ENCODE measurements at regions of chr18 and their contacts with region 1.

Region 1: GRCh38 chr18:77207540-77207939 is 42.1 kb upstream of the GALR1 start:
- DNase-seq: peak in 4 of 5 donors; percentile 43 to 89 (median 58)
- H3K4me3 ChIP-seq: no peak overlapping the region
- H3K27ac ChIP-seq: peak overlapping the region in 1 of 2 donors; percentile 45
- H3K4me1 ChIP-seq: peaks cover 0 to 5% (median 5%) of the 10 kb centered on the region in 3 donors
- H3K27me3 ChIP-seq: no peaks in the 10 kb centered on the region
- CTCF ChIP-seq: peak; percentile 47

Region 2: DNA sequence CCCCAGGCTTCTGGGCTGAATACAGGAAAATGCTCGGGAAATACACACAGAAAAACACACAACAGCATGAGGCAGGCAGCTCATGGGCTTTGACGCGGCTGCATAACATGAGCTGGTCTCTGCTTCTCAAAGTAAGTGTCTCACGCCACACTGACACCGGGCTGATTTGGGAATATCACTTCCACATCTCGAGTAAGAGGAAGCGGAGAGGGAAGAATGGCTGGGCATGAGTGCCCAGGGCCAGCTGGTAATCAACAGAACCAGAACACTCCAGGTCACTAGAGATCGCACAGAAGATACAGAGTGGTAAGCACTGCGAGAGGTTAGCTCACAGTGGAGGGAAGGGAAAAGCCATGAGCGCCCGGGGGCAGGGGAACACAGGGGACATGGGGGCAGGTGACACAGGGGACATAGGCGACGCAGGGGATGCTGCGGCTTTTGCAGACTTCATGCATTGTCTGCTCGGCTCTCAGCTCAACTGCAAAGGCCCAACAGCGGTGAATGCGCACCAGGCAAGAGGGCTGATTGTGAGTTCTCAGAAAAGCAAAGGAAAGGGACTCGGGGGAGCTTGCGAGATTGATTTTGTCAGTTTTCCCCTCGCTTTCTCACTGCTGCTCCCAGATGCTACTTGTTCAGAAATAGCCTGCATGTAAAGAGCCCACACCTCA is 216.4 kb before region 1 on chr18:
- intact Hi-C with region 1: loop called (anchors 10 kb)
- DNase-seq: peak in 1 of 5 donors; percentile 32
- H3K4me3 ChIP-seq: no peak overlapping the region
- H3K27ac ChIP-seq: peak overlapping the region in 1 of 2 donors; percentile 3
- H3K4me1 ChIP-seq: peaks cover 0 to 7% (median 0%) of the 10 kb centered on the region in 3 donors
- H3K27me3 ChIP-seq: no peaks in the 10 kb centered on the region
- CTCF ChIP-seq: no peak

Region 3: DNA sequence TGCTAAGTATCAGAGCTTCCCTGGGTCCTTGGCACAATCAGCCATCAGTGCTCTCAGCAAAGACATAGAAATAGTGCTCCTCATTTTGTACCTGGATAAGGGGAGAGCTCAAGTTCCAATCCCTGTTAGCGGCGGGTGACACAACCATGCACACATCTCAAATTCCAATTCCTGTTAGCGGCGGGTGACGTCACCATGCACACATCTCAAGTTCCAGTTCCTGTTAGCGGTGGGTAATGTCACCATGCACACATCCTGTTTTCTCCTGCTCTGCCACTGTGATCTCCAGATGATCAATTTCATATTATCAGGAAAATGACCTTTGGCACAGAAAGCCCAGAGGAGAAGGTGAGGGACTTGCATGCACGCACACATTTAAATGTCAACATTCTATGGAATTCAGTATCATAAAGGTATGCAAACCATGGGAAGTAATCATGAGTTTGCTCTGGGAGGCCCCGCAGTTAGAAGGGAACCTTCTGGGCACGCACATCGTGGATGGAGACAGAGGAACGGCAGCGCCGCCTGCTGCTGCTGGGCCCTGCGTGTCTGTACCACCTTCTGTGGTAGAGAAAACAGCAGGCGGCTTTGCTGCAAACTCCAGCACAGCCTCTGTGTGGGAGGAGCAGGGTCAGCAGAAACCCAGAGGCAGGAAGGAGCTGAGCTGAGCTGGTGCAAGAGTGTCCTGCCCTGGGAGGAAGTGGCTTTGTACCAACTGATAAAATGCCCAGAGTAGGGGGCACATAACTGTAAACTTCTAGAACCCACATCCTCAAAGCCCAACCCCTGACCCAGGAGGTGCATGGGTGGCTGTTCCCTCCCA is 152.7 kb before region 1 on chr18:
- intact Hi-C with region 1: no loop called
- DNase-seq: peak; percentile 89 to 94 (median 91)
- H3K4me3 ChIP-seq: no peak overlapping the region
- H3K27ac ChIP-seq: peak overlapping the region; percentile 65 to 86
- H3K4me1 ChIP-seq: peaks cover 9 to 41% (median 39%) of the 10 kb centered on the region in 3 donors
- H3K27me3 ChIP-seq: no peaks in the 10 kb centered on the region
- CTCF ChIP-seq: peak; percentile 47

Region 4: DNA sequence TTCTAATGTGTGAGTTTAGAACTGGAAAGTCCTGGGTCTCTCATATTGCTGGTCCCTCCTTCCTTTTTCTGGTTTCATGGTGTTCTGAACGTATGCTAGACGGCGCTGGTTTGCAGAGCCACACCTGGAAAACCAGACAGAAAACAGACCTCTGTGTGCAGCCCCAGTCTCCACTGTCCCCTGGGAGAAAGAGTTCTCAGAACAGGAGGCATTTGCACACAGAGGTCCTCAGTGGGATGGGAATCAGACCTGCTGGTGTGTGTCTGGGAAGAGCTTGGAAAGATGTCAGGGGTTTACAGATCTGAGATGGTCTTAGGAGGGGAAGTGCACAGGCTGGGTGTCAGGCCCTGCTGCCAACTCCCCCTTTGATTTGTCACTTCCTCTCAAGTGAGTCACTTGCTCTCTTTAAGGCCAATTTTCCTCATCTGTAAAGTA is 60.1 kb before region 1 on chr18:
- intact Hi-C with region 1: loop called (anchors 10 kb)
- DNase-seq: no peak
- H3K4me3 ChIP-seq: no peak overlapping the region
- H3K27ac ChIP-seq: no peak overlapping the region
- H3K4me1 ChIP-seq: no peaks in the 10 kb centered on the region
- H3K27me3 ChIP-seq: no peaks in the 10 kb centered on the region
- CTCF ChIP-seq: no peak